Activated T-helper 2 cell treated with anti-CD3 and anti-CD28 coated beads, Interferon-gamma antibody, Interleukin-2, Interleukin-4, amounts not matched to agents 10 μg/mL and 5 μg/mL and 100 μg/mL, durations not matched to agents 14 hours and 24 hours and 36 hours (primary cell): ENCODE measurements at regions of chr4 and their contacts with region 1.

Region 1: GRCh38 chr4:73069338-73070073 is at the start of gene COX18:
- DNase-seq: peak; percentile 94
- H3K4me3 Mint-ChIP-seq: peak within 1 kb of the TSS; percentile 83
- H3K27ac Mint-ChIP-seq: peak within 1 kb of the TSS; percentile 100
- H3K4me1 Mint-ChIP-seq: peaks cover 35% of the 10 kb centered on the region
- H3K27me3 Mint-ChIP-seq: no peaks in the 10 kb centered on the region
- total RNA-seq, gene COX18: 20.9 and 21.3 TPM in 2 replicates

Region 2: DNA sequence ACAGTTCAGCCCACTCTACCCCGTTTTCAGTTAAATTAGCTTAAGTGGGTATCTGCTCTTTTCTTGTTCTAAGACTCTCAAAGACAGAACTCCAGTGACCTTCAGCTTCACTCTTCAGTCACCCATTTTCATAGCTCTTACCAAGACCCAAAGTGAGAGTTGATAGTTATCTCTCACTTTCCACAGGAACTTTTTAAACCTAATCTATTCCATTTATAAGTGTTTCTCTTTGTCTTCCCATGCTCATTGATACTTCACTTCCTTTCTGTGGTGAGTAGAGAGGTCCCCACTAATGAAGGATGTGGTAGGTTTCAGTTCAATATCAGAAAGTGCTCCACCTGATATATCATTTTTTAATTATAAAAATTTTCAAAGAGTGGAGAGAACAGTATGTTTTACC is 33.4 kb before region 1 on chr4:
- intact Hi-C with region 1: loop called (anchors 2 kb)
- DNase-seq: no peak
- H3K4me3 Mint-ChIP-seq: no peak overlapping the region
- H3K27ac Mint-ChIP-seq: no peak overlapping the region
- H3K4me1 Mint-ChIP-seq: peaks cover 8% of the 10 kb centered on the region
- H3K27me3 Mint-ChIP-seq: peaks cover 3% of the 10 kb centered on the region

Region 3: GRCh38 chr4:73222466-73223257 is 153.2 kb after region 1 on chr4:
- intact Hi-C with region 1: loop called (anchors 1 kb)
- DNase-seq: peak; percentile 57
- H3K4me3 Mint-ChIP-seq: no peak overlapping the region
- H3K27ac Mint-ChIP-seq: no peak overlapping the region
- H3K4me1 Mint-ChIP-seq: peaks cover 23% of the 10 kb centered on the region
- H3K27me3 Mint-ChIP-seq: no peaks in the 10 kb centered on the region

Region 4: GRCh38 chr4:73329300-73329699 is 259.8 kb after region 1 on chr4:
- intact Hi-C with region 1: no loop called
- DNase-seq: no peak
- H3K4me3 Mint-ChIP-seq: no peak overlapping the region
- H3K27ac Mint-ChIP-seq: no peak overlapping the region
- H3K4me1 Mint-ChIP-seq: peaks cover 3% of the 10 kb centered on the region
- H3K27me3 Mint-ChIP-seq: no peaks in the 10 kb centered on the region

Region 5: GRCh38 chr4:73468170-73468569 is 398.7 kb after region 1 on chr4:
- intact Hi-C with region 1: no loop called
- DNase-seq: no peak
- H3K4me3 Mint-ChIP-seq: no peak overlapping the region
- H3K27ac Mint-ChIP-seq: no peak overlapping the region
- H3K4me1 Mint-ChIP-seq: no peaks in the 10 kb centered on the region
- H3K27me3 Mint-ChIP-seq: no peaks in the 10 kb centered on the region

Region 6: DNA sequence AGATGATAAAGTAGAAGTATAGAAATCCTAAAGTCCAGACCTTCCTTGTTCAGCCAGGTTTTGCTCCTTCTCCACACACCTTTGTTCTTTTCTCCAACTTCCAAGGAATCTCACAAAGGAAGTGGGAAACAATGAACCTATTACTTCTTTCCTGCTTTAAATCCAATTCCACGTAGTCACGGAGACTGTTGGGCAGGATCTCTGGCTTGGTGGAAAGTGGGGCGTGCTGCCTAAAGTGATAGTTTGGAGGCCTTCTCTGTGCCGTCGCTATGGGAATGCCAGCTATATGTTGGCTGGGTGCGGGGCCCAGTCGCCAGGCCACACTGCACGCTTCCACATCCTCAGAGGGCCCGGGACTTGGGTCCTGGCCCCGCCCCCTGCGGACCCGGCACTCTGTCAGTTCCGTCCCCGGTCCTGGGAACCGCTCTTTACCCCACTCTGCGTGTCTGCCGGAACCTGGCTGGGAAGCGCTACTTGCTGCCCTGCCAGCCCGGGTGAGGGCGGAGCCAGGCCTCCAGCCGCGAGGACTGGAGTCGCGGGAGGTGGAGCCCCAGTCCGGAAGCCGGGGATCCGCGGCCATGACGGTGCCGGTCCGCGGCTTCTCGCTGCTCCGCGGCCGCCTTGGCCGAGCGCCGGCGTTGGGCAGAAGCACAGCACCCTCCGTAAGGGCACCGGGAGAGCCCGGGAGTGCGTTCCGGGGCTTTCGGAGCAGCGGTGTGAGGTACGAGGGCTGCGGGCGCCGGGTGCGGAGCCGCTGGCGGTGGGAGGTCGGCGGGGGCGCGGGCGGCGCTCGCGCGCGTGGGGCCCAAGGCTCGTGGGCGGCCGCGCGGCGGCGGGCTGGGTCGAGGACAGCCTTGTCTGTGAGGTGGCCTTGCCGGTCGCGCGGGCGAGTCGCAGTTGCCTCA is 1088.3 kb after region 1 on chr4 and contains the start of gene MTHFD2L:
- intact Hi-C with region 1: loop called (anchors 10 kb)
- DNase-seq: peak; percentile 79
- H3K4me3 Mint-ChIP-seq: peak within 1 kb of the TSS; percentile 87
- H3K27ac Mint-ChIP-seq: peak within 1 kb of the TSS; percentile 90
- H3K4me1 Mint-ChIP-seq: peaks cover 25% of the 10 kb centered on the region
- H3K27me3 Mint-ChIP-seq: peaks cover 28% of the 10 kb centered on the region
- total RNA-seq, gene MTHFD2L: 8.6 TPM in 2 replicates